ENCODE measurements at regions of chr1 and their contacts with region 1.

Region 1: GRCh38 chr1:108512239-108512981 is 47.5 kb upstream of the EEIG2 start:
- DNase-seq: no peak
- ATAC-seq: peak; percentile 61; the same call in 2 of the 3 replicates
- H3K4me3 ChIP-seq: no peak overlapping the region
- H3K27ac ChIP-seq: no peak overlapping the region
- H3K4me1 ChIP-seq: no peaks in the 10 kb centered on the region
- H3K27me3 ChIP-seq: no peaks in the 10 kb centered on the region
- CTCF ChIP-seq: peak; percentile 69 to 91 (median 76)
- EP300 ChIP-seq: no peak
- POLR2A ChIP-seq: no peak
- RAD21 ChIP-seq: peak; percentile 95

Region 2: DNA sequence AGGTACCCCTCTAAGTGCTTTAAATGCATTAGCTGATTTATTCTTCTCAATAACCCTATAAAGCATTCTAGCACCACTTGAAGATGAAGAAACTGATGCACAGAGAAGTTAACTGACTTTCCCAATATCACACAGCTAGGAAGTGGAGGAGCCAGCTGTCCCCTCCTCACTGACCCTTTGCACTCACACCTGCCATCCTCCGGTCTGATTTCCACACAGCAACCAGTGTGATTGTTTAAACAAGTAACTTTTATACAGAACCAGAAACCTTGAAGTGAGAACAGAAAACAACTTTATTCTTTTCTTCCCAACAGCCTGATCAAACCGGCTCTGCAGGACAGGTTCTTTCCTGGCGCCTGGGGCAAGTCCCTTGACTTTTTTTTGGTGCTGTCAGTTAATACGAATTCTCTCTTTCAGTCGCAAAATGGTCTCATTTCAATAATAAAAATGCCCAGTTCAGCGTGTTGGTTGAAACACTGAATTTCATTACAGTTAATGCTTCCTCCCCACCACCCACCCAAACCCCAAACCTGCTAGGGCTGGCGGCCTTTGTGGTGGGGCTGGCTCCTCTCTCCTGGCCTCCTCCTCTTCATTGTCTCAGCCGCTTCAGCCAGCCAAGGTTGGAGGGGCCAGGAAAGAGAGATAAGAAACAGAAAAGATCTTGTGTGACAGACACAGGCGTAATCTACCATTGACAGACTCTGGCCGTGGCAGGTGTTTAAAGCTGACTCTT is 21.1 kb after region 1 on chr1:
- CTCF ChIA-PET with region 1: interaction called, 14 read pairs
- POLR2A ChIA-PET with region 1: interaction called, 4 read pairs
- RAD21 ChIA-PET with region 1: interaction called, 5 read pairs
- SMC1A ChIA-PET with region 1: interaction called, 5 read pairs
- in situ Hi-C with region 1: no loop called
- intact Hi-C with region 1: no loop called
- DNase-seq: peak; percentile 40
- ATAC-seq: peak; percentile 80
- H3K4me3 ChIP-seq: no peak overlapping the region
- H3K27ac ChIP-seq: no peak overlapping the region
- H3K4me1 ChIP-seq: peaks cover 6% of the 10 kb centered on the region
- H3K27me3 ChIP-seq: no peaks in the 10 kb centered on the region
- CTCF ChIP-seq: 0 out of 6 replicates have a peak, but pooled peaks of 1 of the 3 experiments have one; percentile 8
- EP300 ChIP-seq: 0 out of 4 replicates have a peak, but pooled peaks of 1 of the 2 experiments have one; percentile 58
- POLR2A ChIP-seq: no peak
- RAD21 ChIP-seq: 0 out of 2 replicates have a peak, but pooled peaks have one; percentile 12

Region 3: GRCh38 chr1:108570128-108570527 is 57.7 kb after region 1 on chr1:
- CTCF ChIA-PET with region 1: interaction called, 29 read pairs
- POLR2A ChIA-PET with region 1: no interaction called
- RAD21 ChIA-PET with region 1: interaction called, 12 read pairs
- SMC1A ChIA-PET with region 1: interaction called, 39 read pairs
- in situ Hi-C with region 1: no loop called
- intact Hi-C with region 1: no loop called
- DNase-seq: no peak
- ATAC-seq: peak; percentile 99
- H3K4me3 ChIP-seq: no peak overlapping the region
- H3K27ac ChIP-seq: no peak overlapping the region
- H3K4me1 ChIP-seq: peaks cover 3% of the 10 kb centered on the region; the same call in 1 of the 2 replicates
- H3K27me3 ChIP-seq: no peaks in the 10 kb centered on the region
- CTCF ChIP-seq: peak; percentile 68 to 73 (median 68)
- EP300 ChIP-seq: no peak
- POLR2A ChIP-seq: no peak
- RAD21 ChIP-seq: peak; percentile 63

Region 4: DNA sequence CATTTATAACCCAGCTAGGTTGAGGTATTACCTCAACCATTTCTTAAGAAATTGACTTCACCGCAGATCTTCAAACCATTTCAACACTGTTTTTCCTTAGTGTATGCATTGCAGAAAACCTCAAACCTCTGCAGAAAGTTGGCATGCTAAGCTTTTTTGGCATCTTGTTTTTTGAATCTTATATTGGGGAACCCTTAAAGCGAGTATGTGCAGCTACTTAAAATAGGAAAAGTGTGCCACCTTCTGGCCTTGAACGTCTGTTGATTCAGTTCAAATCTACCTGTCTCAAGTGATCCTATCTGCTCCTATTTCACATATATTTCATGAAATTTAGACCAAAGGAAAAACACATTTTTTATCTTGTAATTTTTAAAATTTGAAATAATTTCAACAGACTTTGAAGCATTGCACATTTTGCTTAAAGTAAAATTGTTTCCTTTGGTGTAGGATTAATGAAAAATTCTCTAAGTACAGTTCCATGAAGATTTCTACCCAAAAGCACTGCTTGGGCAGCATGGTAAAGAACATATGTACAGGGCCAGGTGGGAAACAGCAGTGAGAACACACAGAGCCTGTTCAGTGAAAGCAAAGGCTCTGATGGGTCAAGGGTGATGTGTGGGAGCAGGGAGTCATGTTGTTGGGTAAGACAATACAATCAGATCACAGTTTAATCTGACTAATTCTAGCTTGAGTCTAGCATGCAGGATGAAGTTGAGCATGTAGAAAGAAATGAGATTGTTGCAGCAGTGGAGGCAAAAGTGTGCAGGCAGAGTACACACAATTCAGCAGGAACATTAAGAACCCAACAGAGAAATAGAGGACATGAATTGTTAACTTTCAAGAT is 131.3 kb after region 1 on chr1:
- CTCF ChIA-PET with region 1: interaction called, 73 read pairs
- POLR2A ChIA-PET with region 1: no interaction called
- RAD21 ChIA-PET with region 1: interaction called, 29 read pairs
- SMC1A ChIA-PET with region 1: interaction called, 60 read pairs
- in situ Hi-C with region 1: no loop called
- intact Hi-C with region 1: loop called (anchors 1 kb)
- DNase-seq: peak; percentile 16
- ATAC-seq: peak; percentile 86
- H3K4me3 ChIP-seq: no peak overlapping the region
- H3K27ac ChIP-seq: no peak overlapping the region
- H3K4me1 ChIP-seq: peaks cover 3% of the 10 kb centered on the region; the same call in 1 of the 2 replicates
- H3K27me3 ChIP-seq: no peaks in the 10 kb centered on the region
- CTCF ChIP-seq: peak; percentile 36 to 69 (median 47); a peak in 5 of 6 replicates
- EP300 ChIP-seq: no peak
- POLR2A ChIP-seq: no peak
- RAD21 ChIP-seq: peak; percentile 71

Region 5: GRCh38 chr1:108691942-108692723 is 179.7 kb after region 1 on chr1 and contains the start of gene PRPF38B:
- CTCF ChIA-PET with region 1: interaction called, 6 read pairs
- POLR2A ChIA-PET with region 1: no interaction called
- RAD21 ChIA-PET with region 1: no interaction called
- SMC1A ChIA-PET with region 1: no interaction called
- in situ Hi-C with region 1: no loop called
- intact Hi-C with region 1: loop called (anchors 5 kb)
- DNase-seq: peak; percentile 66
- ATAC-seq: peak; percentile 93
- H3K4me3 ChIP-seq: peak within 1 kb of the TSS; percentile 96
- H3K27ac ChIP-seq: peak within 1 kb of the TSS; percentile 88
- H3K4me1 ChIP-seq: no peaks in the 10 kb centered on the region
- H3K27me3 ChIP-seq: no peaks in the 10 kb centered on the region
- CTCF ChIP-seq: no peak
- EP300 ChIP-seq: no peak
- POLR2A ChIP-seq: peak; percentile 99
- RAD21 ChIP-seq: no peak
- polyA plus RNA-seq, gene PRPF38B: 32.9 to 37.9 TPM

Region 6: GRCh38 chr1:108708691-108709660 is 196.6 kb after region 1 on chr1:
- CTCF ChIA-PET with region 1: interaction called, 3 read pairs
- POLR2A ChIA-PET with region 1: no interaction called
- RAD21 ChIA-PET with region 1: no interaction called
- SMC1A ChIA-PET with region 1: no interaction called
- in situ Hi-C with region 1: no loop called
- intact Hi-C with region 1: loop called (anchors 5 kb)
- DNase-seq: no peak
- ATAC-seq: peak; percentile 86
- H3K4me3 ChIP-seq: no peak overlapping the region
- H3K27ac ChIP-seq: no peak overlapping the region
- H3K4me1 ChIP-seq: peaks cover 1% of the 10 kb centered on the region; the same call in 1 of the 2 replicates
- H3K27me3 ChIP-seq: no peaks in the 10 kb centered on the region; a peak in 1 of 4 replicates
- CTCF ChIP-seq: peak; percentile 33 to 58 (median 36)
- EP300 ChIP-seq: no peak
- POLR2A ChIP-seq: no peak
- RAD21 ChIP-seq: peak; percentile 47

Region 7: DNA sequence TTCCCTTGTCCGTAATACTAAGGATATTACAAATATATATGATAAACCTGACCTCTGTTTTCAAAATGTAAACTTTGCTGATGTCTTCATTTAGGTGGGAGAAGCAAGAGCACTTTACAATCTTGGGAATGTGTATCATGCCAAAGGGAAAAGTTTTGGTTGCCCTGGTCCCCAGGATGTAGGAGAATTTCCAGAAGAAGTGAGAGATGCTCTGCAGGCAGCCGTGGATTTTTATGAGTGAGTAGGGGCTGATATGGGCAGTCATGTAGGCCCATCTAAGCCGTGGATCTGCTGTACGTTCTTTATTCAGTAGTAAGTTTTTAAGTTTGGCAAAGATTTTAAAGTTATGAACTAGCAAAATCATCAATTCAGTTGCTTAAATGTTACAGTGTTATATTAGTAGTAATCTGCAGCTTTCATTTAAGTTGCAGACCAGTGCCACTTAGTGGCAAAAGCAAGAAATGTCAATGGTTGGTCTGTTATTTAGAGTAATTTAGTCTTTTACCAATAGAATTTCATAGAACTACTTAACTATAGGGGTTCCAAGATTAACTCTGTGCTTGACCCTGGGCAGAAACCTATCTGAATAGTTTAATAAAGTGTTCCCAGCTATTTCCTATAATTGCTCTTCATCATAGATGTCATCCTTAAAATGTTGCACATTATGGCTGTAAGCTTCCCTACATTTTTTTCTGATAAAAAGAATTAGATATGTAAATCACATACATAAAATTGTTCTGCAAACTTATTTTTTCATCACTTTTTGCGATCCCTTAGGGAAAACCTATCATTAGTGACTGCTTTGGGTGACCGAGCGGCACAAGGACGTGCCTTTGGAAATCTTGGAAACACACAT is 385.7 kb after region 1 on chr1:
- CTCF ChIA-PET with region 1: no interaction called
- POLR2A ChIA-PET with region 1: no interaction called
- RAD21 ChIA-PET with region 1: no interaction called
- SMC1A ChIA-PET with region 1: no interaction called
- in situ Hi-C with region 1: no loop called
- intact Hi-C with region 1: loop called (anchors 5 kb)
- DNase-seq: no peak
- ATAC-seq: peak; percentile 82
- H3K4me3 ChIP-seq: no peak overlapping the region
- H3K27ac ChIP-seq: no peak overlapping the region
- H3K4me1 ChIP-seq: no peaks in the 10 kb centered on the region
- H3K27me3 ChIP-seq: no peaks in the 10 kb centered on the region
- CTCF ChIP-seq: peak; percentile 55 to 80 (median 64)
- EP300 ChIP-seq: no peak
- POLR2A ChIP-seq: no peak
- RAD21 ChIP-seq: peak; percentile 86